GM18951 (cell line): ENCODE measurements at regions of chr17 and their contacts with region 1.

Region 1: GRCh38 chr17:21400816-21401593 is 24.8 kb downstream of the KCNJ12 start:
- POLR2A ChIP-seq: no peak

Region 2: GRCh38 chr17:21463779-21464407 is 62.9 kb after region 1 on chr17:
- in situ Hi-C with region 1: no loop called
- POLR2A ChIP-seq: no peak

Region 3: GRCh38 chr17:21689604-21690003 is 288.6 kb after region 1 on chr17:
- in situ Hi-C with region 1: loop called (anchors 5 kb)
- POLR2A ChIP-seq: no peak